Right lobe of liver (tissue), 6 donors: ENCODE measurements at regions of chr1 and their contacts with region 1.

Region 1: GRCh38 chr1:210301615-210302000 is 27.1 kb upstream of the HHAT start:
- DNase-seq: no peak
- ATAC-seq: no peak
- H3K4me3 ChIP-seq: no peak overlapping the region
- H3K27ac ChIP-seq: no peak overlapping the region
- H3K4me1 ChIP-seq: no peaks in the 10 kb centered on the region
- H3K27me3 ChIP-seq: no peaks in the 10 kb centered on the region
- CTCF ChIP-seq: no peak
- POLR2A ChIP-seq: no peak

Region 2: DNA sequence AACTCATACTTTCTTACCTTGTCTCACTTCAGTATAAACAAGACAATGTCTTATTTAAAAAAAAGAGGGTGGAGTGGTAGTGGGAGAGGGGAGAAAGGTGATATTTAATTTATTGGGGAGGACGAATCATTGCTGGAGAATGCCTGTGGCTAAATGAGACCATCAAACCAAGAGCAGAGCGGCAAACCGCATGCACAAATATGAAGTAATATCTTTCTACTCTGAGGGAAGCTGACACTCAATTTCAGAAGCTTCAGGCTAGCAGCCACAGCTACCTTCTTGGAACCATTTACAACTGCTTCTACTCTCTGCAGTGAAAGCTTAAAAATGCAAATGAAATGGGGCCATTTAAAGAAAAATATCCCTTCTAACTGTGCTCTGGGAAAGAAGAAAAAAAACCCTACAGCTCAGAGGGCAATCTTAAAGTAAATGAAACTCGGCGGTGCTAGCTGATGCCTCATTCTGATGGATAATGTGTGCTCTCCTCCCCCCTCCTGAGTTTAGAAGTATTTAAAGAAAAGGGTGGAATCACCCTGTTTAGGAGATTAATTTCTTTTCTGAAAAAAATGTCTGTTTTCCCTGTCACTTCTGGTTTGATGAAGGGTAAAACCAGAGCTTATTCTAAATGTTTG is 896.3 kb before region 1 on chr1:
- intact Hi-C with region 1: no loop called
- DNase-seq: no peak
- ATAC-seq: no peak
- H3K4me3 ChIP-seq: no peak overlapping the region
- H3K27ac ChIP-seq: no peak overlapping the region
- H3K4me1 ChIP-seq: no peaks in the 10 kb centered on the region
- H3K27me3 ChIP-seq: no peaks in the 10 kb centered on the region
- CTCF ChIP-seq: no peak
- POLR2A ChIP-seq: no peak

Region 3: DNA sequence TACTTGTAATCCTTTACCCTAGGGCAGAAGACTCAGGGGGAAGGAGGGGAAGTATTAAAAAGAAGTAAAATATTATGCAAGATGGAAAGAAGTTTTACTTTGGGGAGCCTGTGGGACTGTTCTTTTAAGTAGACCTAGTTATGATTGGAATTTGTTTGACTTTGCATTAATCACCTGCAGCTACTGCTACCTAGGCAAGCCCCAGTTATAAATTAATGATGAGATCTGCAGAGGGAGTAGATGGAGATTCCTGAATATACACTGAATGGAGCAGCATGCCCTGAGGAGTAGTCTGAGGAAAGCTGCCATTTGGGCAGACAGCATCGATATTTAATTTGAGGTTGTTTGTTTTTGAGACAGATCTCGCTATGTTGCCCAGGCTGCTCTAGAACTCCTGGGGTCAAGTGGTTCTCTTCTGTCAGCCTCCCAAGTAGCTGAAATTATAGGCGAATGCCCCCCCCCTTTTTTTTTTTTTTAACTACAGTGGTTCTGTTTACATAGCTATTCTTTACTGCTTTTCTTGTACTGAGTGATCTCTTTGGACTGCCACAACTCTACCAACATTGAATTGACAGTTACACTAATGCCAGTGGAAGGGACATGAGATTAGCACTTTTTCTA is 150.4 kb before region 1 on chr1:
- intact Hi-C with region 1: loop called in 1 of 2 experiments (anchors 10 kb)
- DNase-seq: no peak
- ATAC-seq: no peak
- H3K4me3 ChIP-seq: no peak overlapping the region
- H3K27ac ChIP-seq: no peak overlapping the region
- H3K4me1 ChIP-seq: no peaks in the 10 kb centered on the region
- H3K27me3 ChIP-seq: no peaks in the 10 kb centered on the region
- CTCF ChIP-seq: no peak
- POLR2A ChIP-seq: no peak